ENCODE measurements at regions of chr10 and their contacts with region 1.

Region 1: GRCh38 chr10:63515002-63515763 is 6.0 kb upstream of the REEP3 start:
- DNase-seq: peak in 1 of 2 donors; percentile 32
- ATAC-seq: peak; percentile 12 to 89 (median 68)
- H3K4me3 ChIP-seq: peak overlapping the region in 1 of 10 donors; percentile 7
- H3K27ac ChIP-seq: peak overlapping the region in 9 of 10 donors; percentile 29 to 87 (median 71)
- H3K4me1 ChIP-seq: peaks cover 0 to 59% (median 50%) of the 10 kb centered on the region in 9 donors
- H3K27me3 ChIP-seq: no peaks in the 10 kb centered on the region
- CTCF ChIP-seq: no peak

Region 2: DNA sequence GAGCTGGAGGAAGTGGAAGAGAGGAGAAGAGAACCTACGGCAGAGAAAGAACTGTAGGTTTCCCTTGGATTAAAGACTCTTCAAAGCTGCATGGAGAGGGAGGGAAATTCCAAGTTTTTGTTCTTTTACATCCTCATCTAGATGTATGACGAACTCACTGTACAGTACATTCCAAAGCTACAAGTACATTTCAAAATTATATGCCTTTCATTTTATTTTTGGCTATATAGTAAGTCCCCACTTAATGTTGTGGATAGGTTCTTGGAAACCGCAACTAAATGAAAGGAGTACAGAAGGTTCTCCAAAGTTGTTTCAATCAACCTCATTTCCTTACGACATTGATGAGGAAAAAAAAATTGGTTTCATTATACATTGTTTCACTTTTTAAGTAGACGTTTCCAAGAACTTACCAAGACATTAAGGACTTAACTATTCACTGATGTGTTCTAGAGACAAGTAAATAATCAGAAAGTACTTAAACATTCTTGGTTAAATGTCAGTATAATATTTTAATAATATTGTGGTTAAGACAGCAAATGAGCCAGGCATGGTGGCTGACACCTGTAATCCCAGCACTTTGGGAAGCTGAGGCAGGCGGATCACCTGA is 33.3 kb before region 1 on chr10:
- intact Hi-C with region 1: loop called in 1 of 10 experiments (anchors 5 kb)
- DNase-seq: no peak
- ATAC-seq: peak in 1 of 8 donors; percentile 14
- H3K4me3 ChIP-seq: peak overlapping the region in 2 of 10 donors; percentile 6 to 10
- H3K27ac ChIP-seq: peak overlapping the region in 4 of 10 donors; percentile 14 to 24 (median 22)
- H3K4me1 ChIP-seq: peaks cover 0 to 49% (median 27%) of the 10 kb centered on the region in 9 donors
- H3K27me3 ChIP-seq: no peaks in the 10 kb centered on the region
- CTCF ChIP-seq: no peak

Region 3: GRCh38 chr10:63976538-63976937 is 461.4 kb after region 1 on chr10:
- intact Hi-C with region 1: no loop called
- DNase-seq: peak in 1 of 2 donors; percentile 22
- ATAC-seq: peak in 6 of 8 donors; percentile 20 to 82 (median 74)
- H3K4me3 ChIP-seq: no peak overlapping the region
- H3K27ac ChIP-seq: no peak overlapping the region
- H3K4me1 ChIP-seq: no peaks in the 10 kb centered on the region
- H3K27me3 ChIP-seq: no peaks in the 10 kb centered on the region
- CTCF ChIP-seq: peak in 8 of 9 donors; percentile 10 to 57 (median 43)